OCI-LY7 (cell line): ENCODE measurements at regions of chr1 and their contacts with region 1.

Region 1: GRCh38 chr1:2545759-2546514 is 10.2 kb upstream of the TNFRSF14 start:
- DNase-seq: peak; percentile 93
- H3K4me3 ChIP-seq: peak overlapping the region; percentile 76
- H3K27ac ChIP-seq: peak overlapping the region; percentile 92
- H3K4me1 ChIP-seq: peaks cover 44% of the 10 kb centered on the region
- CTCF ChIP-seq: no peak

Region 2: GRCh38 chr1:2391041-2391930 is 154.7 kb before region 1 on chr1 and contains the starts of genes MORN1 and RER1:
- CTCF ChIA-PET with region 1: no interaction called
- POLR2A ChIA-PET with region 1: interaction called, 3 read pairs
- intact Hi-C with region 1: loop called (anchors 1 kb)
- DNase-seq: peak; percentile 99
- H3K4me3 ChIP-seq: peak within 1 kb of the TSS; percentile 87
- H3K27ac ChIP-seq: peak within 1 kb of the TSS; percentile 70
- H3K4me1 ChIP-seq: peaks cover 53% of the 10 kb centered on the region
- CTCF ChIP-seq: no peak
- total RNA-seq, gene MORN1: 13.1 and 19.4 TPM in 2 replicates
- total RNA-seq, gene RER1: 54.4 and 60.5 TPM in 2 replicates

Region 3: GRCh38 chr1:2412519-2413233 is 133.3 kb before region 1 on chr1 and contains the start of gene PEX10:
- CTCF ChIA-PET with region 1: interaction called, 5 read pairs
- POLR2A ChIA-PET with region 1: interaction called, 7 read pairs
- intact Hi-C with region 1: loop called (anchors 1 kb)
- DNase-seq: peak; percentile 97
- H3K4me3 ChIP-seq: peak within 1 kb of the TSS; percentile 98
- H3K27ac ChIP-seq: peak within 1 kb of the TSS; percentile 73
- H3K4me1 ChIP-seq: peaks cover 48% of the 10 kb centered on the region
- CTCF ChIP-seq: no peak
- total RNA-seq, gene PEX10: 22.6 and 23.3 TPM in 2 replicates

Region 4: GRCh38 chr1:2429780-2430591 is 116.0 kb before region 1 on chr1:
- CTCF ChIA-PET with region 1: no interaction called
- POLR2A ChIA-PET with region 1: no interaction called
- intact Hi-C with region 1: loop called (anchors 5 kb)
- DNase-seq: no peak
- H3K4me3 ChIP-seq: no peak overlapping the region
- H3K27ac ChIP-seq: no peak overlapping the region
- H3K4me1 ChIP-seq: no peaks in the 10 kb centered on the region
- CTCF ChIP-seq: peak; percentile 67

Region 5: GRCh38 chr1:2494323-2494693 is 51.6 kb before region 1 on chr1:
- CTCF ChIA-PET with region 1: no interaction called
- POLR2A ChIA-PET with region 1: no interaction called
- intact Hi-C with region 1: loop called (anchors 1 kb)
- DNase-seq: peak; percentile 43
- H3K4me3 ChIP-seq: no peak overlapping the region
- H3K27ac ChIP-seq: no peak overlapping the region
- H3K4me1 ChIP-seq: peaks cover 80% of the 10 kb centered on the region
- CTCF ChIP-seq: no peak

Region 6: DNA sequence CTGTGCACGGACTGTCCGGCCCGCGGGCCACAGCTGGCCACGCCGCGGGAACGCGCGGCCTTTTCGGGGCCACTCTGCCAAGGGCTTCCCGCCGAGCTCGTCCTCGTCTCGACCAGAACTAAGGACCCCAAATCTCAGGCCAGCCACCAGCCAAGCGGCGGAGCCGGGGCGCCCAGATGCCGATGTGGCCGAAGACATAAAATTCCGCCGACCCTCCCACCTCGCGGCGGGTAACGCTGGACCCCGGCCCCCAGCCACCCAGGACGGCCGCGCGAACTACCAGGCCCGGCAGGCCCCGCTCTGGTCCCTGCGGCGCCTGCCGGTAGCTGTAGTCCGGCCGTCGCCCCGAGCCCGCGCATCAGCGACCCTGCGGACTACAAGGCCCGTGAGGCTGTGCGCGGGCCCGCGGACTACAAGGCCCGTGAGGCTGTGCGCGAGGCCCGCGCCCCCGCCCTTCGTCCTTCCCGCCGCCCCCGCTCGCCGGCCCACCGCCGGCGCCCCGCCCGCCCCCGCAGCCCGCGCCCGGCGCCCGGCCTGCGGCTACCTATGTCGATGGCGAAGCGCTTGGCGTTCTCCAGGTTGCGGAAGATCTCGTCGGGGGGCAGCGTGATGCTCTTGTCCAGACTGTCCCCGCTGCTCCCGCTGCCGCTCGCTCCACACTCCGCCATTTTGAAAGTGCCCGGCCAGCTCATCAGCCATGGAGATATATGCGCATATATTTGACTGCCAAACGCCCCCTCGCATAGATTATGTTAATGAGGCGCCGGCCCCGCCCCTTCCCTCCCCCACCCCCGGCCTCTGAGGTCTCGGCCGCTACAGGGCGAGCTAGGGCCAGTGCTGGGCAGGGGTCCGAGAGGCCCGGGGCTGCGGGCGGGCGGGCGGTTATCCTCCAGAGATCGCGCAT is 19.8 kb before region 1 on chr1 and contains the start of gene PANK4:
- CTCF ChIA-PET with region 1: no interaction called
- POLR2A ChIA-PET with region 1: interaction called, 11 read pairs
- intact Hi-C with region 1: loop called (anchors 1 kb)
- DNase-seq: peak; percentile 96
- H3K4me3 ChIP-seq: peak within 1 kb of the TSS; percentile 100
- H3K27ac ChIP-seq: peak within 1 kb of the TSS; percentile 38
- H3K4me1 ChIP-seq: peaks cover 26% of the 10 kb centered on the region
- CTCF ChIP-seq: no peak
- total RNA-seq, gene PANK4: 43.6 and 55.9 TPM in 2 replicates

Region 7: GRCh38 chr1:2586154-2587070 is 40.5 kb after region 1 on chr1 and contains the start of gene PRXL2B:
- CTCF ChIA-PET with region 1: no interaction called
- POLR2A ChIA-PET with region 1: interaction called, 15 read pairs
- intact Hi-C with region 1: loop called (anchors 2 kb)
- DNase-seq: peak; percentile 94
- H3K4me3 ChIP-seq: peak within 1 kb of the TSS; percentile 90
- H3K27ac ChIP-seq: peak within 1 kb of the TSS; percentile 89
- H3K4me1 ChIP-seq: peaks cover 33% of the 10 kb centered on the region
- CTCF ChIP-seq: no peak
- total RNA-seq, gene PRXL2B: 7.0 and 10.4 TPM in 2 replicates

Region 8: DNA sequence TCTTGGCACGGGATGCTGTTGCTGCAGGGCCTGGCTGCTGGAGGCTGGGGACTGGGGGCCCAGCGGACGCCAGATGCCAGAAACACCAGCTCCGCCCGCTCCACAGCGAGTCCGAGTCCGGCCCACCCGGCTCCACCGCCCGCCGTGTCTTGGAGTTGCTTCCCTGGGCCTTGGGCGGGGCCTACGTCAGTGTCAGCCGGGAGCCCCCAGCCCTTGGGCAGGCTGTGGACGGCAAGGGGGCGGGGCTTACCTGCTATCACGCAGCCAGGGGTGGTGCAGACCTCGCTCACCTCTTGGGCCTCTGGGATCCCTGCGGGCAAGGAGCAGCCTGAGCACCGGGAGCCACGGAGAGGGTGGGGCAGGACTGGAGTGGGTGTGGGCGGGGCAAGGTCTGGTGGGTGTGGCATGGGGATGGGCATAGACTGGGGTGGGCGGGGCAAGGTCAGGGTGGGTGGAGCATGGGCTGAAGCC is 65.1 kb after region 1 on chr1:
- CTCF ChIA-PET with region 1: no interaction called
- POLR2A ChIA-PET with region 1: no interaction called
- intact Hi-C with region 1: no loop called
- DNase-seq: peak; percentile 31
- H3K4me3 ChIP-seq: no peak overlapping the region
- H3K27ac ChIP-seq: no peak overlapping the region
- H3K4me1 ChIP-seq: no peaks in the 10 kb centered on the region
- CTCF ChIP-seq: no peak

Region 9: DNA sequence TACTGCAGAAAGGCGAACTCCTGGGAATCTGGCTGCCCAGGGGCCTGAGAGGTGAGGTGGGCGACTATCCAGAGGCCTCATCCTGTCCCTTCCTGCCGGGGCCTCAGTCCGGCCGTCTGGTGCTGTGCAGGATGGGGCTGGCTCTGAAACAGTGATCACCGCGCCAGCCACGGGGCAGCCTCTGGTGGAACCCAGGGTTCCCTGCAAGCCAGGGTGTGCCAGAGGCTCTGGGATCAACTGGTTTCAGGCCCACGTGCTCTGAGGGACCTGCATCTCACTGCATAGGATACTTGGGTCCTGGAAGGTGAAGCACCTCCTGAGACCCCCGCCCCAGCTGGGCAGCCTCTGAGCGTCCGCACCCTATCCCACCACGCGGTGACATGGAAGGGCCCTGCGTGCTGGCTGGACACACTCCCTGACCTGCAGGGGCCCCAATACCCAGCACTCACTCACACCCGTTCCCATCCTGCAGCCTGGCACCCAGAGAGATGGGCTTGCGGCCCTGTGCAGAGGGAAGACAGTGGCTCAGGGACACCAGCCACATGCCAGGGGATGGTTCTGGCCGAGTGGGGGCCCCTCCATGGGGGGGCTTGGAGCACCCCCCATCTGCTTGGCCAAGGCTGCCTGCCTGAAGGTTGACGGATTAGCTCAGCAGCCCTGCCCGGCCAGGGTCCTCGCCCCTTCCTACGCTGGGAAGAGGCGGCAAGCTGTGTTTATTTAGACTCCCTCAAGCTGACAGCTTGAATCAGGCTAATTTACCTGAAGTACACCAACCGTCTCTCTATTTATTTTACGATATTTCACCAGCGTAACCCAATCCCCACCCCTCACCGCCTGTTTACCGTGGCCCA is 319.9 kb after region 1 on chr1:
- CTCF ChIA-PET with region 1: no interaction called
- POLR2A ChIA-PET with region 1: no interaction called
- intact Hi-C with region 1: no loop called
- DNase-seq: no peak
- H3K4me3 ChIP-seq: no peak overlapping the region
- H3K27ac ChIP-seq: no peak overlapping the region
- H3K4me1 ChIP-seq: no peaks in the 10 kb centered on the region
- CTCF ChIP-seq: no peak